T-cell (primary cell): ENCODE measurements at regions of chr17 and their contacts with region 1.

Region 1: DNA sequence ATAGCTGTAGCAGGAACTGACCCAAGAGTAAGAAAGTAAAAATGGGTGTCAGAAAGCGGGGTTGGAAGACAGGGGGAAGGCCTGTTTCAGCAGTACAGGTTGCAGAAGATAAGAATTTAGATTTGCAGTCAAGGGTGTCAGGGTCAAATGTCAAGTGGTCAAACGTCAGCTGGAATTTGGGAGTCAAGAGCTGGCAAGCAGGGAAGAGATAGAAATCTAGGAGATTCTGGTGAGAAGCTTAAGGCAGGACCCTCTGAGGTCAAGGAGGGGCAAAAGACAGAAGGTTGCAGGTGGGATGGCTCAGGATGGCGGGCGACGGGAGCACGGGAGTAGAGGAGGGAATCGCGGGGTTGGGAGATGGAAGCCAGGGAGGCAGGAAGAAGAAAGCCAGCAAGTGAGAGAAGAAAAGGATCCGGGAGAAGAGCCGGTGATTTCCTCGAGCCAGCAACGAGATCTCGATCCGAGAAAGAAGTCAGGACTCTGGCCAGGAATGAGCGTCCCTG is 335 bp downstream of the SLC25A35 start:
- DNase-seq: no peak
- ATAC-seq: no peak
- H3K4me3 ChIP-seq: peak overlapping the region; percentile 81 to 88
- H3K4me3 Mint-ChIP-seq: peak overlapping the region; percentile 85 to 97 (median 88)
- H3K27ac ChIP-seq: peak overlapping the region; percentile 72
- H3K27ac Mint-ChIP-seq: peak overlapping the region; percentile 94
- H3K4me1 ChIP-seq: peaks cover 5 to 25% of the 10 kb centered on the region in 2 experiments
- H3K4me1 Mint-ChIP-seq: peaks cover 32 to 42% (median 39%) of the 10 kb centered on the region in 3 donors
- H3K27me3 ChIP-seq: no peaks in the 10 kb centered on the region
- H3K27me3 Mint-ChIP-seq: no peaks in the 10 kb centered on the region

Region 2: DNA sequence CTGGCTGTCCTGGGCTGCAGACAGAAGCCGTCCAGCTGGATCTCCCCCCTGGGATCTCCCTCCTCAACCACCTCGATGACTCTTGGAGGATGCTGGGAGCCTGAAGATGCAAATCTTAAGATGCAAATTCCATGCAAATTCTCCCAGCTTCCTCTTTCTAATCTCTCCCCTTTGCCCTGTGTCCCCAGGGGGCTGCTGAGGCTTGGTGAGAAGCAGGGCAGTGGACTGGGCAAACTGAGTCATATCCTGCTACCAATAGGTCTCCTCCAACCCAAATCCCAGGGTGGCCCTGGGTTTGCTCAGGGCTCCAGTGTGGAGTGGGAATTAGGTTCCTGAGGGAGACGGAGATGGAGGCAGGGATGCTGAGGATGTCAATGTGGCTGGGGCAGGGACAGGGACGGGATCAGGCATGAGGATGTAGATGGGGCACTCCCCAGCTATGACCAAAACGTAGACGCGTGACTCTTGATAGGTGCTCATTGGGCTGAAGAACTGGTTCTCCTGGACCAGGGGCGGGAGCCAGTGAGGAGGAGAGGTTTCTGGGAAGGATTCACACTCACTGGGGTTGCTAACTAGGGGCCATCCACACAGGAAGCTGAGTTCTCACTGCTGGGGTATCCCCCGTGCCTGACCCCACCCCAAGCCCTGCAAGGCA is 203.7 kb before region 1 on chr17:
- CTCF ChIA-PET with region 1: no interaction called
- POLR2A ChIA-PET with region 1: no interaction called
- DNase-seq: no peak
- ATAC-seq: no peak
- H3K4me3 ChIP-seq: no peak overlapping the region
- H3K4me3 Mint-ChIP-seq: no peak overlapping the region
- H3K27ac ChIP-seq: no peak overlapping the region
- H3K27ac Mint-ChIP-seq: no peak overlapping the region
- H3K4me1 ChIP-seq: peaks cover 0 to 13% of the 10 kb centered on the region in 2 experiments
- H3K4me1 Mint-ChIP-seq: peaks cover 12 to 21% (median 18%) of the 10 kb centered on the region in 3 donors
- H3K27me3 ChIP-seq: peaks cover 2 to 60% of the 10 kb centered on the region in 2 experiments
- H3K27me3 Mint-ChIP-seq: peaks cover 24 to 38% of the 10 kb centered on the region in 2 donors

Region 3: DNA sequence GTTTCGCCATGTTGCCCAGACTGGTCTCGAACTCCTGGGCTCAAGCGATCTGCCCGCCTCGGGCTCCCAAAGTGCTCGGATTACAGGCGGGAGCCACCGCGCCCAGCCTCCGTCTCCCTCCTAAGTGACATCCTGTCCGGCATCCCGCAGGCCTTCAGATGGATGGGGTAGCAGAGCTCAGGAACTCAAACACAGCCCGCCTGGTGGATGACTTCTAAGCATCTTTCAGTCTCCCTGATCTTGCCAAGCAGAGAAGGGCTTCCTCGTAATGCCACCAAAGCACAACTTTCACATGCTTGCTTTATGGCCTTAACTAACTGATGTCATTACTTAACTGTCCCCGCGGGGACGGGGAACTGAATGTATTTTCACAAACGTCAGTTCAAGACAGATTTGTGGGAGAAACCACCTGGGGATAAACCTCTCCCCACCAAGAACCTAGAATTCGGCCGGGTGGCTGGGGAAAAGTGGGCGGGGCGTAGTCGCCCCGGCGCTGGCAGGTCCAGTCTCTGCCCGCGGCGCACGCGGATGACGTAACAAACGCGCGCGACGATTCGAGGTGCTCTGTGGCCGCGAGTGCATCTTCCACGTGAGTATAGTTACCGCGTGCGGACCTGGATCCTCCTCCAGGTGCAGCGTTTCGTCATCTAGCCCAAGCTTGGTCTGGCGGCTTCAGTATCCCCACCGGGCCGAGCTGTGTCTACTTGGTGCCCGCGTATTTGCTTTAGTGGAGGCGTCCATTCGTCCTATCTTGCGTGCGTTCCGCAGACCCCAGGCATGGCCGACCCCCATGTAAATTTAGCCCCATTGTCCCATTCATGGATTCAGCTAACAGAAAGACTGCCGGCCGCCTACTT is 45.9 kb before region 1 on chr17 and contains the start of gene PFAS:
- CTCF ChIA-PET with region 1: interaction called in 1 of 2 experiments, 17 read pairs
- POLR2A ChIA-PET with region 1: interaction called, 5 to 15 read pairs
- DNase-seq: peak; percentile 85 to 98 (median 93)
- ATAC-seq: peak; percentile 42 to 64 (median 61)
- H3K4me3 ChIP-seq: peak within 1 kb of the TSS; percentile 81 to 91
- H3K4me3 Mint-ChIP-seq: peak within 1 kb of the TSS; percentile 99 to 100 (median 99)
- H3K27ac ChIP-seq: peak within 1 kb of the TSS; percentile 99
- H3K27ac Mint-ChIP-seq: peak within 1 kb of the TSS; percentile 97 to 98
- H3K4me1 ChIP-seq: peaks cover 22 to 46% of the 10 kb centered on the region in 2 experiments
- H3K4me1 Mint-ChIP-seq: peaks cover 48 to 63% (median 48%) of the 10 kb centered on the region in 3 donors
- H3K27me3 ChIP-seq: no peaks in the 10 kb centered on the region
- H3K27me3 Mint-ChIP-seq: no peaks in the 10 kb centered on the region
- total RNA-seq, gene PFAS: 31.5 to 52.4 (median 37.8) TPM